CD8-positive, alpha-beta T cell (primary cell): ENCODE measurements at regions of chr7 and their contacts with region 1.

Region 1: GRCh38 chr7:105797652-105798051 is 78.7 kb downstream of the ATXN7L1 start:
- DNase-seq: no peak
- ATAC-seq: no peak
- H3K4me3 ChIP-seq: no peak overlapping the region
- H3K4me3 Mint-ChIP-seq: no peak overlapping the region
- H3K27ac ChIP-seq: no peak overlapping the region
- H3K27ac Mint-ChIP-seq: no peak overlapping the region
- H3K4me1 ChIP-seq: peaks cover 10% of the 10 kb centered on the region
- H3K4me1 Mint-ChIP-seq: peaks cover 31% of the 10 kb centered on the region
- H3K27me3 ChIP-seq: no peaks in the 10 kb centered on the region
- H3K27me3 Mint-ChIP-seq: no peaks in the 10 kb centered on the region
- CTCF ChIP-seq: no peak

Region 2: GRCh38 chr7:105734233-105734632 is 63.4 kb before region 1 on chr7:
- CTCF ChIA-PET with region 1: no interaction called
- POLR2A ChIA-PET with region 1: no interaction called
- intact Hi-C with region 1: no loop called
- DNase-seq: no peak
- ATAC-seq: no peak
- H3K4me3 ChIP-seq: no peak overlapping the region
- H3K4me3 Mint-ChIP-seq: no peak overlapping the region
- H3K27ac ChIP-seq: no peak overlapping the region
- H3K27ac Mint-ChIP-seq: no peak overlapping the region
- H3K4me1 ChIP-seq: no peaks in the 10 kb centered on the region
- H3K4me1 Mint-ChIP-seq: no peaks in the 10 kb centered on the region
- H3K27me3 ChIP-seq: no peaks in the 10 kb centered on the region
- H3K27me3 Mint-ChIP-seq: no peaks in the 10 kb centered on the region
- CTCF ChIP-seq: no peak

Region 3: GRCh38 chr7:105826143-105826542 is 28.5 kb after region 1 on chr7:
- CTCF ChIA-PET with region 1: no interaction called
- POLR2A ChIA-PET with region 1: interaction called, 3 read pairs
- intact Hi-C with region 1: loop called in 1 of 2 experiments (anchors 1 kb)
- DNase-seq: no peak
- ATAC-seq: no peak
- H3K4me3 ChIP-seq: no peak overlapping the region
- H3K4me3 Mint-ChIP-seq: no peak overlapping the region
- H3K27ac ChIP-seq: no peak overlapping the region
- H3K27ac Mint-ChIP-seq: no peak overlapping the region
- H3K4me1 ChIP-seq: no peaks in the 10 kb centered on the region
- H3K4me1 Mint-ChIP-seq: peaks cover 26% of the 10 kb centered on the region
- H3K27me3 ChIP-seq: no peaks in the 10 kb centered on the region
- H3K27me3 Mint-ChIP-seq: no peaks in the 10 kb centered on the region
- CTCF ChIP-seq: no peak